ENCODE measurements at regions of chr2 and their contacts with region 1.

Region 1: GRCh38 chr2:102599480-102599879 is 19.9 kb upstream of the SLC9A2 start:
- DNase-seq: no peak
- ATAC-seq: no peak
- H3K4me3 ChIP-seq: no peak overlapping the region
- H3K27ac ChIP-seq: no peak overlapping the region
- H3K4me1 ChIP-seq: no peaks in the 10 kb centered on the region
- H3K27me3 ChIP-seq: peaks cover 0 to 23% (median 0%) of the 10 kb centered on the region in 7 donors
- CTCF ChIP-seq: no peak

Region 2: GRCh38 chr2:102489646-102490045 is 109.8 kb before region 1 on chr2:
- intact Hi-C with region 1: loop called in 1 of 10 experiments (anchors 1 kb)
- DNase-seq: no peak
- ATAC-seq: no peak
- H3K4me3 ChIP-seq: no peak overlapping the region
- H3K27ac ChIP-seq: no peak overlapping the region
- H3K4me1 ChIP-seq: peaks cover 0 to 10% (median 0%) of the 10 kb centered on the region in 9 donors
- H3K27me3 ChIP-seq: peaks cover 0 to 18% (median 11%) of the 10 kb centered on the region in 7 donors
- CTCF ChIP-seq: no peak

Region 3: DNA sequence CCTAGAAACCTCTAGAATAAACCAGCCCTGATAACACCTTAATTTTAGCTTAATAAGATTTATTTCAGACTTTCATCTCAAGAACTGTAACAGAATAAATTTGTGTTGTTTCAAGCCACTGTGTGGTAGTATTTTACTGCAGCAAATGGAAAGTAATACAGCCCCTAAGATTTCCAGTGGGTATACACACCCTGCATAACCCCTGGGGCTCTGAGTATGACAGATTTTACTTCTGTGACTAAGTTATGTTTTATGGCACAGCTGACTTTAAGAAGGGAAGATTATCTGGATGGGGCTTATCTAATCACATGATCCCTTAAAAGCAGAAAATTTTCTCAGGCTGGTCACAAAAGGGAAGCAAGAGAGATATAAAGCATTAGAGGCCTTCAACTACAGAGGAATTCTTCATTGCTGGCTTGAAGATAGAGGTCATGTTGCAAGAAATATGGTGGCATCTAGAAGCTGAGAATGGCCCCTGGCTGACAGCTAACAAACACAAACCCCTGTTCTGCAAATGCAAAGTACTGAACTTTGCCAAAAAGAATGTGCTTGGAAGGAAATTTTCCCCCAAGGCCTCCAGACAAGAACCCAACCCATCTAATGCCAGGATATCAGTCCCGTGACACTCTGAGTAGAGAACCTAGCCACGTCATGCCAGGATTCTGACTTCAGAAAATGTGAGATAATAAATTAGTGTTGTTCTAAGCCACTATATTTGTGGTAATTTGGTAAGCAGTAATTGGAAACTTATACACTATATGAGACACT is 48.0 kb before region 1 on chr2:
- intact Hi-C with region 1: no loop called
- DNase-seq: no peak
- ATAC-seq: no peak
- H3K4me3 ChIP-seq: no peak overlapping the region
- H3K27ac ChIP-seq: no peak overlapping the region
- H3K4me1 ChIP-seq: no peaks in the 10 kb centered on the region
- H3K27me3 ChIP-seq: no peaks in the 10 kb centered on the region
- CTCF ChIP-seq: no peak

Region 4: GRCh38 chr2:102726128-102727087 is 126.9 kb after region 1 on chr2:
- intact Hi-C with region 1: no loop called
- DNase-seq: no peak
- ATAC-seq: peak in 3 of 8 donors; percentile 16 to 50 (median 25)
- H3K4me3 ChIP-seq: no peak overlapping the region
- H3K27ac ChIP-seq: no peak overlapping the region
- H3K4me1 ChIP-seq: no peaks in the 10 kb centered on the region
- H3K27me3 ChIP-seq: no peaks in the 10 kb centered on the region
- CTCF ChIP-seq: no peak

Region 5: DNA sequence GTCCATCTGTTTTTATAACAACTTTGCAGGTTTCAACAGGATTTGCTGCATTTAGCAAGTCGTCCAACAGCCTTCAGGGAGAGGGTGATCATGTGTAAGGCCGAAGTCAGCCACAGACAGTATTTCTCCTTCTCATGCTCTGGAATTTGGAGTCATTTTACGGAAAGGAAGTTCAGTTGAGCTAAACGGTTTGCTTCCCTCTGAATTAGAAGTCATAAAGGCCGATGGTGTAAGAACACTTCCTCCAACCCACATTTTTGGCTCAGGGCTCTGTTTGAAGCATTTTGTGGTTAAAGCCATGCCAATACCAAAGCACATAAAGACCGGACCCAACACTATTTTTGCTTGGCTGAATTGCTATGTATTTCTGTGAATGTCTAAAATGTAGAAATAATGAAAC is 291.8 kb after region 1 on chr2:
- intact Hi-C with region 1: no loop called
- DNase-seq: no peak
- ATAC-seq: no peak
- H3K4me3 ChIP-seq: no peak overlapping the region
- H3K27ac ChIP-seq: no peak overlapping the region
- H3K4me1 ChIP-seq: peaks cover 0 to 8% (median 0%) of the 10 kb centered on the region in 9 donors
- H3K27me3 ChIP-seq: peaks cover 0 to 7% (median 0%) of the 10 kb centered on the region in 7 donors
- CTCF ChIP-seq: no peak